ENCODE measurements at regions of chr11 and their contacts with region 1.

Region 1: GRCh38 chr11:35391922-35392813 is 27.2 kb downstream of the SLC1A2 start:
- DNase-seq: peak; percentile 86 to 90
- H3K4me3 ChIP-seq: peak overlapping the region; percentile 16; the same call in 1 of the 2 replicates
- H3K27ac ChIP-seq: peak overlapping the region; percentile 72
- H3K4me1 ChIP-seq: peaks cover 49% of the 10 kb centered on the region
- H3K27me3 ChIP-seq: no peaks in the 10 kb centered on the region
- CTCF ChIP-seq: peak; percentile 99

Region 2: GRCh38 chr11:34890812-34891211 is 501.4 kb before region 1 on chr11:
- CTCF ChIA-PET with region 1: no interaction called
- POLR2A ChIA-PET with region 1: no interaction called
- intact Hi-C with region 1: no loop called
- DNase-seq: peak in 1 of 2 experiments; percentile 64
- H3K4me3 ChIP-seq: no peak overlapping the region
- H3K27ac ChIP-seq: no peak overlapping the region
- H3K4me1 ChIP-seq: peaks cover 37% of the 10 kb centered on the region
- H3K27me3 ChIP-seq: no peaks in the 10 kb centered on the region
- CTCF ChIP-seq: peak; percentile 86

Region 3: DNA sequence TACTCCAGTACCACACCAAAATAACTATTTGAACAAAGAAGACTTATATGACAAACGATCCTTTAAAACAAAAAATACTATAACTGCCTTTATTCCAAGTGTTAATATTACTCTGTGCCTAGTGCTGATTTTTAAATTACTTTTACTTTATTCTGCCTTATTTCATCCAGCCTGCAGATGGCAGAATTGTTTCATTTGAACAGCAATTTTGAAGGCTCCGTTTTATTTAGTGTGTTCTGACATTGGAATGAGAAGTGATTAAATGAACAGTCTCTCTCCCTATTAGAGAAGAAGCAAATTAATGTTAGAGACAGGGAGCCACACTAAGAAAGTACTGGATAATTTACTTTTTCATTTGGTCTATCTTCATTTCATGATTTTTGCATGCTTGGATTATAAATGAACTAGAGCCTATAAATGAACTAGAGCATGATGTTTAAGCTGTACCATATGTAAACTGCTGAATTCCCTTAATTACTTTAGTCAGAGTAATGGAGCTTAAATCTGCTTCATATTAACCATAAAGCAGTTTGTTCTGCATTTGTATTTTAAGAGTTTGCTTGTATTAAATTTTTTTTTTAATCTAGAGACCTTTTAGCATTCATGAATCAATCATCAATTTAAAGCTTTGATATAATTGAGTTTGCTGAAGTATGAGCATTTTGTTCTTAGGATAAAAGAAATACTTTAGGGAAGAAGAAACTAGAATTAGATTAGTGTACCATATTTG is 465.9 kb before region 1 on chr11:
- CTCF ChIA-PET with region 1: interaction called, 4 read pairs
- POLR2A ChIA-PET with region 1: no interaction called
- intact Hi-C with region 1: loop called (anchors 1 kb)
- DNase-seq: peak; percentile 8 to 50
- H3K4me3 ChIP-seq: no peak overlapping the region
- H3K27ac ChIP-seq: no peak overlapping the region
- H3K4me1 ChIP-seq: peaks cover 13% of the 10 kb centered on the region
- H3K27me3 ChIP-seq: no peaks in the 10 kb centered on the region
- CTCF ChIP-seq: peak; percentile 94

Region 4: DNA sequence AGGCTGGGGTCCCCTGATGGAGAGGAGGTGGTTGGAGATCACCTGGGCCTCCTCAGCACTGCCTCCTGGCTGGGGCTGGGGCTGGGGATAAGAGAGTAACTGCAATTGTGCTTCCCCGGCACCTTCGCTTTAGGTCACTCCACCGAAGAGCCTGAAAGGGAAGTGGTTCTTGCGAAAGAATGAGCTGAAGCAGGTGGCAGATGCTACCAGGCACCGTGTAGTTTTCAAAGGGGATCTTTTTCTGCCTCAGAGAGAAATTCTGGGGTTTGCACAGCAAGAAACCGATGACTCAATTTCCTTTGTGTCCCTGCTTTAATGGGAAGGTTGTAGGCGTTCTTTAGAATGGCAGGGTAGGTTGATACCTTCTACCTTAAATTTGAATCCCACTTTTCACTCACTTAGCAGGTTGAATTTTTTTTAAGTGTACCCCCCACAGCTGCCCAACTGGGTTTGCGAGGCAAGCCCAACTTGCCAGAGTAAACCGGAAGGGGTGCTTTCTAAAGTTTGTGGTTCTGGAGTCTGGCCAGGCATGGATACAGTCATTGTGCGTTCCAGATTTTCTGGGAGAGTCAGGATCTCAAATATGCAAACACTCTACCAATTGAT is 247.9 kb before region 1 on chr11:
- CTCF ChIA-PET with region 1: no interaction called
- POLR2A ChIA-PET with region 1: no interaction called
- intact Hi-C with region 1: loop called (anchors 2 kb)
- DNase-seq: peak; percentile 69 to 91
- H3K4me3 ChIP-seq: peak overlapping the region; percentile 70
- H3K27ac ChIP-seq: peak overlapping the region; percentile 91
- H3K4me1 ChIP-seq: peaks cover 85% of the 10 kb centered on the region
- H3K27me3 ChIP-seq: no peaks in the 10 kb centered on the region
- CTCF ChIP-seq: no peak

Region 5: DNA sequence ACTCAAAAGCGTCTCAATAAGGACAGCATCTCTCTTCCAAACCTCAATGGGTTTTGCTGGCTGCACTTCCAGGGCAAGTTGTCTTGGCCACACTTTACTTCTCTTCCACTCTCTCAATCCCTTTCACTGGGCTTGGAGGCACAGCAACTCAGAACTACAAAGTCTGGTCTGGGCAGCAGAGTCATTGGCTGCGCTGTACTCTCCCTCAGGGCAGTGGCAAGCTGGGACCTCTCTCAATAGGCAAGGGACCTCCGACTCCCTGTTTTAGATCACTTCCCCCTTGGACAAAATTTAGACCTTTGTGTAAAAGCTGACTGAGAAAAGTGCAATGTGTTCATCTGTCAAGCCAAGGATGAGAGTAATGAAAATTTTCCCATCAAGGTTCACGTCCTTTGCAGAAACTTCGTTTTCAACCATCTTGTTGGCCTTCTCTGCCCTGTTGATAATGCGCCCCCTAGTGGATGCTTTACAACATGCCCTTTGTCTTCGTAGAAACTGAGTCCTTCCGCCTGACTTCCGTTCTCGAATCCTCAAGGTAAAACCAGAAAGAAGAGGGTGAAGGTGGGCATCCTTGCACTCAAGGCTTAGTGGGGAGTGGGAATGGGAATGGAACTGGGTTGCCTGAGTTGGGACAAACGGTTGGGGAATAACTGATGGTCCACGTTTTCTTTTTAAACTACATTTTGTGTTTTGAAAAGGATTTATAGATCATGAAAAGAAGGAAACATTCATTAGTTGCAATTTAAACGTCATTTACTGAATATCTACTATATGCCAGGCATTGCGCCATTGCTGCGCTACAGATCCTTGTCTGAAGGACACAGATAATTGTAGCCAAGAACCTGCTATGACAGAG is 154.1 kb before region 1 on chr11:
- CTCF ChIA-PET with region 1: no interaction called
- POLR2A ChIA-PET with region 1: interaction called, 5 read pairs
- intact Hi-C with region 1: loop called (anchors 2 kb)
- DNase-seq: no peak
- H3K4me3 ChIP-seq: no peak overlapping the region
- H3K27ac ChIP-seq: no peak overlapping the region
- H3K4me1 ChIP-seq: peaks cover 33% of the 10 kb centered on the region
- H3K27me3 ChIP-seq: no peaks in the 10 kb centered on the region
- CTCF ChIP-seq: peak; percentile 82

Region 6: DNA sequence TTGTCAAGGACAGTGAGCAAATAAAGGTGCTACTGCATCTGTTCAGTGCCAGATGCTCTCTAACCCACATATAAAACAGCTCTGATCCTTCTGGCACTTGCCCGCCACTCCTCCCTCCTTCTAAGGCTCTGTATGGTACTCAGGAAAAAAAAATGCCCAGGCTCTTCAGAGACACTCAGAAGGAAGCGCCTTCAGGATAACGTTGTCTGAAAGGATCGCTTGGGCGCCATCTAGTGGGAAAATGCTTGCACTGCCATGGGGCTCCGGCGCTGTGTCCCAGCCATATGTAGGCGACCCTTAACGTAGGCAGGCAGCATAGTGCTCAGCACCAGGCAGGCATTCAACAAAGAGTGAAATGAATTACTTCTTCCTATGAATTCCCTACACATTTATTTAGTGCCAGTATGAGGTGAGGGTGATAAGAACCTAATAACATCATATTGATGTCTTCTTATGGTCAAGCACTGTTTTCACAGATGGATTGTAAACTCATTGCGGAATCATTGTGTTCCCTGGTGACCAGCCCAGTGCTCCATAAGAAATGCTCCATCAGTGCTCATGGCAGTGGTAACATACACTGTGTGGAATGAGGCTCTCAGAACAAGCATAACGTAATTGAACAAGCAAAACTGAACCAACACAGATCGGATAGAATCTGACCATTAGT is 93.6 kb after region 1 on chr11:
- CTCF ChIA-PET with region 1: no interaction called
- POLR2A ChIA-PET with region 1: no interaction called
- intact Hi-C with region 1: loop called (anchors 1 kb)
- DNase-seq: peak; percentile 68 to 83
- H3K4me3 ChIP-seq: no peak overlapping the region
- H3K27ac ChIP-seq: no peak overlapping the region
- H3K4me1 ChIP-seq: no peaks in the 10 kb centered on the region
- H3K27me3 ChIP-seq: no peaks in the 10 kb centered on the region
- CTCF ChIP-seq: peak; percentile 96

Measured in PC-9 (cell line).